Posterior vena cava (tissue), 2 donors: ENCODE measurements at regions of chr12 and their contacts with region 1.

Region 1: DNA sequence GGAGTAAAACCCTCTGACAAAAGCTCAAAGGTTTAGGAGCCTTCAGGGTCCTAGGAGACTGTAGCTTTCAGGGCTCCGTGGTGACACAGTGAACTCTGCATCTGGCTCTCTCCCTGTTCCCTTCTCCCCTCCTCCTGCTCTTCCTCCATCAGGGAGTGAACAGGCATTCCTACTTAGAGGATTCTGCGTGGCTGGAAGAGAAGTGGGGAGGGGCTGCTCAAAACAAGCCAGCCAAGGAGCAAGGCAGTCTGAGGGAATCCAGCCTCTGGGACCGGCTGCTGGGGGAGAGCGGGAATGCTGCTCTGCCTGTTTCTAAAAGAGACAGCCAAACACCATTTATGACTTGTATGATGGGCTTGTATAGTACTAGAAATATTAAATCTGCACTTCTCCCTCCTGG is 49.5 kb downstream of the RBMS2 start:
- DNase-seq: peak; percentile 53

Region 2: GRCh38 chr12:56510786-56511185 is 60.3 kb before region 1 on chr12:
- intact Hi-C with region 1: loop called (anchors 2 to 5 kb)
- DNase-seq: no peak

Region 3: GRCh38 chr12:56521590-56522371 is 49.3 kb before region 1 on chr12 and contains the start of gene RBMS2:
- intact Hi-C with region 1: loop called in 1 of 2 experiments (anchors 5 kb)
- DNase-seq: peak; percentile 90
- total RNA-seq, gene RBMS2: 57.2 to 60.5 TPM